Activated CD4-positive, alpha-beta T cell treated with anti-CD3 and anti-CD28 coated beads for 36 hours (primary cell): ENCODE measurements at regions of chr17 and their contacts with region 1.

Region 1: GRCh38 chr17:82863941-82864774 is 24.3 kb upstream of the ZNF750 start:
- DNase-seq: peak; percentile 93
- ATAC-seq: peak; percentile 89
- H3K4me3 Mint-ChIP-seq: peak overlapping the region; percentile 60
- H3K27ac Mint-ChIP-seq: peak overlapping the region; percentile 91
- H3K4me1 Mint-ChIP-seq: peaks cover 70% of the 10 kb centered on the region
- H3K27me3 Mint-ChIP-seq: no peaks in the 10 kb centered on the region

Region 2: DNA sequence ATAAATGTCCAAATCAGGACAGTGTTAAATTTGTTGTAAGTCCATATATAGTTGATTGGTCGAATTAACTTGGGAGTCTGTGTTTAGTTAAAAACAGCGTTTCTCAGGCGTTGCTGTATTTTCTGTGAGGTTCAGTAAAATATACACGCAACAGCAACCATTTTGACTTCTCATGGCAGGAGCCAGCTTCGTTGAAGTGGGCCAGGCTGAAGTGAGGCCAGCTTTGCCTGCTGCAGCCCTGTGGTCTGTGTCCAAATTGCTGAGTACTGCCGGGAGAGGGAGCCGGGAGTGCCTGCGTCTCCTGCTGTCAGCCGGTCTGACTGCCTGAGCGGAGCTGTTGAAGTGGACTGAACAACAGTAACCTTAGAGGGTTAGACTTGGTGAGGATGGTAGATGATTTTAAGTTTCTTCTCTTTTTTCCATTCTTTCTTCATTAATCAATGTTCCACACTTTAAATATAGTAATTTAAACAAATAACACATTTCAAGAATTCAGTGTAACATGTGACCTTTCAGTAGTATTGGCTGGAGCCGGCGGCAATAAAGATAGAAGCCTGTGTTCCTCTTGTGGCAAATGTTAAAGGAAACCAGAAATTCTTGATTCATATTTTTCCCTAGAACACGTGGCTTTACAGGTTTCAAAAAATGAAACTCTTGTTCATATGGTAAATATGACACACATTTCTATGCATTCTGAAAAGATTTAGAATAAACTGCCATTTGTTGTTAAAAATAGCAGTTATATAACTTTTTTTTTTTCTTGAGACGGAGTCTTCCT is 12.6 kb after region 1 on chr17:
- CTCF ChIA-PET with region 1: interaction called, 6 read pairs
- POLR2A ChIA-PET with region 1: no interaction called
- intact Hi-C with region 1: loop called in 1 of 2 experiments (anchors 1 kb)
- DNase-seq: peak; percentile 34
- ATAC-seq: peak; percentile 81
- H3K4me3 Mint-ChIP-seq: no peak overlapping the region
- H3K27ac Mint-ChIP-seq: peak overlapping the region; percentile 60
- H3K4me1 Mint-ChIP-seq: peaks cover 48% of the 10 kb centered on the region
- H3K27me3 Mint-ChIP-seq: no peaks in the 10 kb centered on the region

Region 3: GRCh38 chr17:82881900-82882714 is 17.9 kb after region 1 on chr17:
- CTCF ChIA-PET with region 1: interaction called, 14 read pairs
- POLR2A ChIA-PET with region 1: interaction called, 4 read pairs
- intact Hi-C with region 1: loop called in 1 of 2 experiments (anchors 1 kb)
- DNase-seq: no peak
- ATAC-seq: peak; percentile 5
- H3K4me3 Mint-ChIP-seq: peak overlapping the region; percentile 60
- H3K27ac Mint-ChIP-seq: peak overlapping the region; percentile 92
- H3K4me1 Mint-ChIP-seq: peaks cover 81% of the 10 kb centered on the region
- H3K27me3 Mint-ChIP-seq: no peaks in the 10 kb centered on the region

Region 4: DNA sequence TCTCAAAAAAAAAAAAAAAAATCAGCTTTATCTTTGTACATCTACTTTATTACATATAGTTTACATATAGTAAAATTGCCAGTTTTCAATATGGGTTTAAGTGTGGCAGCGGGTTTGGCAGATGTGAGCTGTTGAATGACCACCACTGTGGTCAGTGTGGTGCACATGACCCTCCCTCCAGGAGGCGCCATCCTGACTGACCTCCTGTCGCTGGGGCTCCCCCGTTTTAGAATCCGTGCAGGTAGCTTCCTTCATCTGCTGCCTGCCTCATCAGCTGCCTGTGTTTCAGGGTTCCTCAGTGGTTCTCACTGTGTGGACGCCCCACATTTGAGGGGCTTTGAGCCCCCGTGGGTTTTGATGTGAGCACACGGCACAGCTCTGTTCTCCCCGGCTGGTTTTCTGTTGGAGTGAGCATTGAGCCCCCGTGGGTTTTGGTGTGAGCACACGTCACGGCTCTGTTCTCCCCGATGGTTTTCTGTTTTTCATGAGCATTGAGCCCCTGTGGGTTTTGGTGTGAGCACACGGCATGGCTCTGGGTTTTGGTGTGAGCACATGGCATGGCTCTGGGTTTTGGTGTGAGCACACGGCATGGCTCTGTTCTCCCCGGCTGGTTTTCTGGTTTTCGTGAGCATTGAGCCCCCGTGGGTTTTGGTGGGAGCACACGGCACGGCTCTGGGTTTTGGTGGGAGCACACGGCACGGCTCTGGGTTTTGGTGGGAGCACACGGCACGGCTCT is 33.5 kb after region 1 on chr17:
- CTCF ChIA-PET with region 1: interaction called, 3 read pairs
- POLR2A ChIA-PET with region 1: no interaction called
- intact Hi-C with region 1: loop called in 1 of 2 experiments (anchors 1 kb)
- DNase-seq: no peak
- ATAC-seq: no peak
- H3K4me3 Mint-ChIP-seq: no peak overlapping the region
- H3K27ac Mint-ChIP-seq: peak overlapping the region; percentile 6
- H3K4me1 Mint-ChIP-seq: peaks cover 28% of the 10 kb centered on the region
- H3K27me3 Mint-ChIP-seq: no peaks in the 10 kb centered on the region

Region 5: GRCh38 chr17:83079352-83079747 is 215.2 kb after region 1 on chr17 and contains the start of gene METRNL:
- CTCF ChIA-PET with region 1: no interaction called
- POLR2A ChIA-PET with region 1: no interaction called
- intact Hi-C with region 1: loop called in 1 of 2 experiments (anchors 1 kb)
- DNase-seq: peak; percentile 82
- ATAC-seq: peak; percentile 21
- H3K4me3 Mint-ChIP-seq: peak within 1 kb of the TSS; percentile 41
- H3K27ac Mint-ChIP-seq: no peak within 1 kb of the TSS
- H3K4me1 Mint-ChIP-seq: peaks cover 26% of the 10 kb centered on the region
- H3K27me3 Mint-ChIP-seq: peaks cover 7% of the 10 kb centered on the region
- total RNA-seq, gene METRNL: 22.4 to 26.3 TPM